Lower leg skin (tissue), 4 donors: ENCODE measurements at regions of chr9 and their contacts with region 1.

Region 1: DNA sequence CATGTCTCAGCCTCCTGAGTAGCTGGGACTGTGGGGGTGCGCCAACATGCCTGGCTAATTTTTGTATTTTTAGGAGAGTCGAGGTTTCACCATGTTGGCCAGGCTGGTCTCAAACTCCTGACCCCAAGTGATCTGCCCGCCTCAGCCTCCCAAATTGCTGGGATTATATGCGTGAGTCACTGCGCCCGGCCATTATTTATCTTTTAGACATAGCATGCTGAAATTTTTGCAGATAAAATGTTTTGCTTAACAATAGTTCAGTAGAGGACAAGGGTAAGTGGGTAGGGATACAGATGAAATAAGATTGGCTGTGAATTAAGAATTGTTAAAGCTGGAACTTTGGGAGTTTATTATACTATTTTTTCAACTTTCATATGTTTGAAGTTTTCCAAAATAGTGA is 150.8 kb upstream of the GRHPR start:
- DNase-seq: no peak
- H3K4me3 ChIP-seq: no peak overlapping the region
- CTCF ChIP-seq: no peak
- POLR2A ChIP-seq: no peak

Region 2: DNA sequence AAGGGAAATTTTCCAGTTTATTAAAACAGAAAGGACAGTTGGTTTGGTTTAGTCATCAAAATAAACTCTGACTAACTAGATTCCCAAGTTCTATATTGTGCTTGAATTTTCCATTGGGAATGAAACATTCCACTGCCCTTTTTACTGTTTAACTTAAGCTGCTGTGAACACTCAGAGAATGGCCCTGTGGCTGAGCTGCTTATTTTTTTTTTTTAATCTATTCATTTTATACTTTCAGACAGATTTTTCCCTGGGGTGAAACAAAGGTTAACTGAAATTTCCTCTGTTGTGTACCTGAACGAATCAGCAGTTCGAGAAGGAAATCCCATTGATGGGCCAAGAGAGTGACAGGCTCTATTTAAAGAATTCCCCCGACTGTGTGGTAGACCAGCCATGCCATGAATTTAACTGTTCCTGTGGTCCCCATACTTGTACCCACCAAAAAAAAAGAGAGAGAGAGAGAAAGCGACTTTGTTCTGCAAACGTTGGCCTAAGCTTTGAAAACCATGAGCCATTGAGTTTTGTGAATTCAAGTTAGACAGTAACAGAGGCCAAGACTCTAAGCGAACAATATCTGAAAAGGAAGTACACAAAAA is 12.1 kb after region 1 on chr9:
- intact Hi-C with region 1: loop called (anchors 1 kb)
- DNase-seq: no peak
- H3K4me3 ChIP-seq: no peak overlapping the region
- CTCF ChIP-seq: no peak
- POLR2A ChIP-seq: no peak

Region 3: GRCh38 chr9:37364751-37365360 is 93.2 kb after region 1 on chr9:
- intact Hi-C with region 1: no loop called
- DNase-seq: no peak
- H3K4me3 ChIP-seq: no peak overlapping the region
- CTCF ChIP-seq: no peak
- POLR2A ChIP-seq: no peak